ENCODE measurements at regions of chr12 and their contacts with region 1.

Region 1: GRCh38 chr12:121580959-121581685 is at the start of gene KDM2B:
- DNase-seq: no peak
- H3K4me3 ChIP-seq: peak within 1 kb of the TSS; percentile 54 to 74
- H3K27ac ChIP-seq: peak within 1 kb of the TSS; percentile 86
- H3K4me1 ChIP-seq: peaks cover 52% of the 10 kb centered on the region
- H3K27me3 ChIP-seq: no peaks in the 10 kb centered on the region
- CTCF ChIP-seq: no peak
- POLR2A ChIP-seq: no peak
- total RNA-seq, gene KDM2B: 18.9 TPM

Region 2: DNA sequence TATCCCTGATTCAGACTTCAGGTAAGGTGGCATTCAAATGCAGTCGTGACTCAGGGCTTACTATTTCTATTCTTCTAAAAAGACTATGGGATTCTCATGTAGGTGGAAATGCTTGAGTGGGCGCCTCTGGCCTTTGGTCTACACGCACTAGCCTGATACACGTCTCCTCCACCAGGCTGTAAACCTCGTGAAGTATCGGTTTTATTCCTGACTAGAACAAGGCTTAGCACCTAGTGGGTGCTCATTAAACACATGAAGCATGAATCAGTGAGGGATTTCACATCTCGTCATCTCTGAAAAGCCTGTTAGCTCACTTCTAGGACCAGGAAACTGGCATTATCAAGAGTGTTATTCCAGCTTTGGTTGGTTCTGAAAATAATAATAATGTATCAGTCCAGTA is 620.5 kb before region 1 on chr12:
- intact Hi-C with region 1: no loop called
- DNase-seq: no peak
- H3K4me3 ChIP-seq: no peak overlapping the region
- H3K27ac ChIP-seq: peak overlapping the region; percentile 63
- H3K4me1 ChIP-seq: peaks cover 12% of the 10 kb centered on the region
- H3K27me3 ChIP-seq: no peaks in the 10 kb centered on the region
- CTCF ChIP-seq: no peak
- POLR2A ChIP-seq: no peak

Region 3: GRCh38 chr12:121610239-121611149 is 29.4 kb after region 1 on chr12:
- intact Hi-C with region 1: loop called (anchors 1 kb)
- DNase-seq: no peak
- H3K4me3 ChIP-seq: peak overlapping the region in 1 of 2 donors; percentile 0
- H3K27ac ChIP-seq: peak overlapping the region; percentile 62
- H3K4me1 ChIP-seq: peaks cover 9% of the 10 kb centered on the region
- H3K27me3 ChIP-seq: no peaks in the 10 kb centered on the region
- CTCF ChIP-seq: no peak
- POLR2A ChIP-seq: no peak